ENCODE measurements at regions of chr13 and their contacts with region 1.

Region 1: GRCh38 chr13:77002590-77003190 is 10.8 kb downstream of the CLN5 start:
- DNase-seq: peak; percentile 12
- ATAC-seq: peak; percentile 59
- H3K4me3 ChIP-seq: no peak overlapping the region
- H3K27ac ChIP-seq: no peak overlapping the region
- H3K4me1 ChIP-seq: no peaks in the 10 kb centered on the region
- H3K27me3 ChIP-seq: no peaks in the 10 kb centered on the region
- CTCF ChIP-seq: peak; percentile 10 to 73 (median 68); a peak in 4 of 6 replicates
- POLR2A ChIP-seq: no peak
- RAD21 ChIP-seq: peak; percentile 44

Region 2: GRCh38 chr13:75675421-75675820 is 1327.3 kb before region 1 on chr13:
- CTCF ChIA-PET with region 1: no interaction called
- POLR2A ChIA-PET with region 1: interaction called, 3 read pairs
- RAD21 ChIA-PET with region 1: no interaction called
- intact Hi-C with region 1: loop called (anchors 10 kb)
- DNase-seq: no peak
- ATAC-seq: no peak
- H3K4me3 ChIP-seq: no peak overlapping the region
- H3K27ac ChIP-seq: no peak overlapping the region
- H3K4me1 ChIP-seq: no peaks in the 10 kb centered on the region
- H3K27me3 ChIP-seq: no peaks in the 10 kb centered on the region
- CTCF ChIP-seq: no peak
- POLR2A ChIP-seq: no peak
- RAD21 ChIP-seq: no peak

Measured in HCT116 (cell line).